ENCODE measurements at regions of chr7 and their contacts with region 1.

Region 1: DNA sequence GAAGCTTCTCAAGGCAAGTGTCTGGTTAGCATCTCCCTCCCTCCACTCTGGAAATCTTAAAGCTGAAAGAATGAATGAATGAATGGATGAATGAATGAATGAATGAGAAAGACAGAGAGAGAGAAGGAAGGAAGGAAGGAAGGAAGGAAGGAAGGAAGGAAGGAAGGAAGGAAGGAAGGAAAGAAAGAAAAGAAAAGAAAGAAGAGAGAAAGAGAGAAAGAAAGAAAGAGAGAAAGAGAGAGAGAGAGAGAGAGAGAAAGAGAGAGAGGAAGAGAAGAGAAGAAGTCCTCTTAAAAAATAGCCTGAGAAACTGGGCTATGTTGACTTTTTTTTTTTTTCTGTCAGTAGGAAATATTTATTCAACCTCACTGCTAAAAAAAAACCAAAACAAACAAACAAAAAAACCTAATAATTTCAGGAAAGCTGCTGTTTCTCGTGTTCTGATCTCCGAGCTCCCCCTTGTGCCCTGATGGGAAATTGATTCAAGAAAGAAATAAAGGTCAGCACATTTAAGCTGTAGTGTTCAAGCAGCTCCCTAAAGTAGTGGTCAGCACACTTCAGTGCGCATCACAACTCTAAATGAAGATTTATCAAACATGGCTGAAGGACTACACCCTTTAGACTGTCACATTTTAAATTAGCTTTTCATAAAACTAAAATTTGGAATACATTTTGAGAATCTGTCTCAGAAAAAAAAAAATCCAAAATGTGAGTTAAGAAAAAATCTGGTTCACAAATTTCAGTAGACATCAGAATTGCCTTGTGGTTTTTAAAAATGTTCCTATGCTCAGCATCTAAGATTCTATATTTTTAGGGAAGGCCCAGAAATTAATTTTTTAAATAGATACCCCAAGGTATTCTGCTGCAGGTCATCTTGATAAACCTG is 154.3 kb downstream of the ELAPOR2 start:
- DNase-seq: peak in 2 of 6 donors; percentile 12 to 41
- ATAC-seq: peak; percentile 51 to 88 (median 69)
- H3K4me3 ChIP-seq: no peak overlapping the region
- H3K27ac ChIP-seq: no peak overlapping the region
- H3K4me1 ChIP-seq: no peaks in the 10 kb centered on the region
- H3K27me3 ChIP-seq: no peaks in the 10 kb centered on the region
- CTCF ChIP-seq: peak in 3 of 4 donors; percentile 18 to 49 (median 30)

Region 2: DNA sequence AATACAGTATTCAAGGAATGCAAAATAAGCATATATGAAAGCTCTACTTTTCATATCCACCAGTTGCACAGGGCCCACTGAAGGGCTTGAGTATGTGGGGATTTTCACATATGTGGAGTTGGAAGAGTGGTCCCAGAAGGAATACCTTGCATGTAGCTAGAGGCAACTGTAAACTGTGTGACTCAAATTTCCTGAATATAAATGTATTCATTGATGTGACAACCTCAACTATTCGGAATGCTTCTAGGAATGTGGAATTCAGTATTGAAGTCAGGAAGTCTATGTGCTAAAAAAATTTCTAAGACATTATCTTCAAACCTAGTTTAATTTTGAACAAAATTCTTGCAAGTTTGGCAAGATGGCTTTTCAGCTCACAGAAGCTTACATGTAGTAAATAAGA is 1022.9 kb before region 1 on chr7:
- intact Hi-C with region 1: loop called in 1 of 3 experiments (anchors 10 kb)
- DNase-seq: no peak
- ATAC-seq: no peak
- H3K4me3 ChIP-seq: no peak overlapping the region
- H3K27ac ChIP-seq: no peak overlapping the region
- H3K4me1 ChIP-seq: no peaks in the 10 kb centered on the region
- H3K27me3 ChIP-seq: no peaks in the 10 kb centered on the region
- CTCF ChIP-seq: no peak

Region 3: DNA sequence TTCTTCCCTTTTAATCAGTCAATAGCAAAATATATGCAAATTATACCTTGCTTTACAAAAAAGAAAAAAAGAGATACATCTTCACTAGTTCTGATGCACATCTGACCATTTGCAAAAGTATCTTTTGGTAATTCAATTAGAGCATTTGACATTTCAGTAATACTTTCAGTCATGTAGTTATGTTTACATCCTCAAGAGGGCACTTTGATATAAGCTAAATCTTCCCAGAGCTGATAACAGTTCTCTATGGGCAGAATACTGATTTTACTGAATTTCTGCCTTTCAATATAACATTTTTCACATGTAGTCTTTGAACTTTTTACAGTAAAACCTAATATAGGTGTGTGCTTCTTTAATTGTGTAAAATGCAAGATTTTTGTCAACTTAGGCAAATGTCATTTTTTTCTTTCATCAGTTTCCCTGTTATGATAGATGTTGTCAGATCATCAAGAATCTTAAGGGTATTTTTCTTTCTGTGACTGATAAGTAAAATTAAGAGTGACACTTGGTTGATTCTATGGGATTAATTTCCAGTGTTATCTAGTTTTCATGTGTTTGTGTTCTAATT is 1014.9 kb before region 1 on chr7:
- intact Hi-C with region 1: loop called in 2 of 3 experiments (anchors 10 kb)
- DNase-seq: no peak
- ATAC-seq: peak in 3 of 4 donors; percentile 72 to 75 (median 72)
- H3K4me3 ChIP-seq: no peak overlapping the region
- H3K27ac ChIP-seq: no peak overlapping the region
- H3K4me1 ChIP-seq: no peaks in the 10 kb centered on the region
- H3K27me3 ChIP-seq: no peaks in the 10 kb centered on the region
- CTCF ChIP-seq: peak in 3 of 4 donors; percentile 19 to 47 (median 34)